MCF 10A (cell line): ENCODE measurements at regions of chr14 and their contacts with region 1.

Region 1: DNA sequence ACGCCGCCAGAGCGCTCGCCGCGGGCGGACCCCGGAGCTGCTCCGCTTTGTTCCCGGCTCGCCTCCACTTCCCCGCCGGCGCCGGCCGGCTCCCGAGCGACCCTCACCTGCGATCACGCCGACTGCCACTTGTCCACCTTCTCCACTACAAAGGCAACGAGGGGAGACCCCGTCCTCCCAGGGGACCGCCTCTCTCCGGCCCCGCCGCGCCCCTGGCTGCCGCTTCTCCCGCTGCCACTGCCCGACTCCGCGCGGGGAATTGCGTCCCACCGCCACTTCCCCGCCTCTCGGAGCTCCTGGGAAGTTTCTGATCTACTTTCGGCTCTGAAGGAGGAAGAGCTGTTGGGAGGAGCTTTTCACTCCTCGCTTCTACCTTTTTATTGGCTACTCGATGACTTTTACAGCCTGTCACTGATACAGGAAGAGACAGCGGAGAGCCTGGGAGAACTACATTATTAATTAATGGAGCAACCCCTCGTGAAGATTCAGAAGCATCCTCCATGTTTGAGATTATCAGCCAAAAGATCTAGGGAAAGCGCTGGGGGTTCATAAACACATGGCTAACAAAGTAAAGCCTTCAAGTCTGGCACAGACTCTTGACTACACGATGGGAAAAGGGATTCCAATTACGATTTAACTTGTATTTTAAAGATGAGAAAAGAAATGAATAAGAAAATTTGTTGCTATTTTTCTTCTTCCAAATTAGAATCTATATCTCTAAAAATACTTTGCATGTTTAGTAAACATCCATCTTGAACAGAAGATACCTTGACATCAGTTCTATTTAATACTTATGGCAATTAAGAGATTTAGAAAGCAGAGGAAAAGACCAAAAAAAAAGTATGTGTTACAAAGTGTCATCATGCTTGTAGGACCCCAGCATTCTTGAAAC is at the start of gene BAZ1A:
- DNase-seq: peak; percentile 94
- H3K4me3 Mint-ChIP-seq: peak within 1 kb of the TSS; percentile 93
- H3K27ac Mint-ChIP-seq: peak within 1 kb of the TSS; percentile 99
- H3K4me1 Mint-ChIP-seq: peaks cover 8% of the 10 kb centered on the region
- H3K27me3 Mint-ChIP-seq: no peaks in the 10 kb centered on the region
- CTCF ChIP-seq: no peak
- total RNA-seq, gene BAZ1A: 33.3 and 44.6 TPM in 2 replicates

Region 2: DNA sequence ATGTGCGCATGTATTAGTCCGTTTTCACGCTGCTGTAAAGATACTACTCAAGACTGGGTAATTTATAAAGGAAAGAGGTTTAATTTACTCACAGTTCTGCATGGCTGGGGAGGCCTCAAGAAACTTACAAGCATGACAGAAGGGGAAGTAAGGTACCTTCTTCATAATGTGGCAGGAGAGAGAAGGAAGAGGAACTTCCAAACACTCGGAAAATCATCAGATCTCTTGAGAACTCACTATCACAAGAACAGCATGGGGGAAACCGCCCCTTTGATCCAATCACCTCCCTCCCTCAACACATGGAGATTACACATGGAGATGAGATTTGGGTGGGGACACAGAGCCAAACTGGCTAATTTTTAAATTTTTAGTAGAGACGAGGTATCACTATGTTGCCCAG is 203.6 kb before region 1 on chr14:
- CTCF ChIA-PET with region 1: no interaction called
- POLR2A ChIA-PET with region 1: interaction called, 3 read pairs
- intact Hi-C with region 1: loop called (anchors 2 kb)
- DNase-seq: no peak
- H3K4me3 Mint-ChIP-seq: no peak overlapping the region
- H3K27ac Mint-ChIP-seq: no peak overlapping the region
- H3K4me1 Mint-ChIP-seq: no peaks in the 10 kb centered on the region
- H3K27me3 Mint-ChIP-seq: no peaks in the 10 kb centered on the region
- CTCF ChIP-seq: no peak

Region 3: DNA sequence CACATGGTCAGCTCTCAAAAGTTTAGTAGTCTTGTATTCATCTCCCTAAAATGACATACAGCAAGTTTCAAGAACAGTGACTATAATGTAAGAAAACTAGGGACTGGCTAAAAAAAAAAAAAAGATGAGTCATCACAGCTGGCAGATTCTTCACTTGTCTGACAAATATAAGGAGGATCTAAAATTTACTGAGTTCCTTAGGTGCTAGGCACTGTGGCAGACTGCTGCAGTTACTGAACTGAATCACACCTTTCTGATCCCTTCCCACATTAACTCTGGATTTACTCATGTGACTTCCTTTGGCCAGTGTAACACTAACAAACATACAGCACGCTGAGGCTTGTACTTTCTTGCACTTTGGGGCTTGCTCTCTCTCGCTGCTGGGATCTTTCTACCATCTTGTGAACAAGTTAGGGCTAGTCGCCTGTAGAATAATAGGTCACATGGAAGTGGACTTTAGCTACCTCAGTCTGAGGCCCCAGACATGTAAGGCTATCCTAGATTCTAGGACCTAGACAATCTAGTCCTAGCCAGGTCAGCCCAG is 32.2 kb before region 1 on chr14:
- CTCF ChIA-PET with region 1: interaction called, 3 read pairs
- POLR2A ChIA-PET with region 1: interaction called, 35 read pairs
- intact Hi-C with region 1: loop called (anchors 2 kb)
- DNase-seq: peak; percentile 95
- H3K4me3 Mint-ChIP-seq: peak overlapping the region; percentile 51
- H3K27ac Mint-ChIP-seq: peak overlapping the region; percentile 66
- H3K4me1 Mint-ChIP-seq: peaks cover 22% of the 10 kb centered on the region
- H3K27me3 Mint-ChIP-seq: no peaks in the 10 kb centered on the region
- CTCF ChIP-seq: no peak

Region 4: GRCh38 chr14:34857689-34858449 is 17.4 kb before region 1 on chr14:
- CTCF ChIA-PET with region 1: interaction called, 3 read pairs
- POLR2A ChIA-PET with region 1: interaction called, 45 read pairs
- intact Hi-C with region 1: no loop called
- DNase-seq: no peak
- H3K4me3 Mint-ChIP-seq: no peak overlapping the region
- H3K27ac Mint-ChIP-seq: no peak overlapping the region
- H3K4me1 Mint-ChIP-seq: peaks cover 7% of the 10 kb centered on the region
- H3K27me3 Mint-ChIP-seq: no peaks in the 10 kb centered on the region
- CTCF ChIP-seq: no peak

Region 5: GRCh38 chr14:35046048-35046741 is 170.9 kb after region 1 on chr14 and contains the start of gene FAM177A1:
- CTCF ChIA-PET with region 1: interaction called, 4 read pairs
- POLR2A ChIA-PET with region 1: interaction called, 48 read pairs
- intact Hi-C with region 1: no loop called
- DNase-seq: peak; percentile 97
- H3K4me3 Mint-ChIP-seq: peak within 1 kb of the TSS; percentile 94
- H3K27ac Mint-ChIP-seq: peak within 1 kb of the TSS; percentile 98
- H3K4me1 Mint-ChIP-seq: peaks cover 24% of the 10 kb centered on the region
- H3K27me3 Mint-ChIP-seq: no peaks in the 10 kb centered on the region
- CTCF ChIP-seq: no peak
- total RNA-seq, gene FAM177A1: 73.9 and 74.6 TPM in 2 replicates